Esophagus muscularis mucosa (tissue), 4 donors: ENCODE measurements at regions of chr7 and their contacts with region 1.

Region 1: GRCh38 chr7:64665980-64666662 is at the start of gene ZNF107:
- DNase-seq: peak; percentile 97
- H3K4me3 ChIP-seq: peak within 1 kb of the TSS; percentile 68 to 91 (median 76)
- H3K27ac ChIP-seq: peak within 1 kb of the TSS; percentile 71 to 81 (median 76)
- H3K4me1 ChIP-seq: peaks cover 8 to 23% (median 21%) of the 10 kb centered on the region in 4 donors
- H3K27me3 ChIP-seq: no peaks in the 10 kb centered on the region
- CTCF ChIP-seq: no peak
- EP300 ChIP-seq: no peak
- POLR2A ChIP-seq: no peak
- total RNA-seq, gene ZNF107: 1.8 to 3.3 (median 2.4) TPM

Region 2: DNA sequence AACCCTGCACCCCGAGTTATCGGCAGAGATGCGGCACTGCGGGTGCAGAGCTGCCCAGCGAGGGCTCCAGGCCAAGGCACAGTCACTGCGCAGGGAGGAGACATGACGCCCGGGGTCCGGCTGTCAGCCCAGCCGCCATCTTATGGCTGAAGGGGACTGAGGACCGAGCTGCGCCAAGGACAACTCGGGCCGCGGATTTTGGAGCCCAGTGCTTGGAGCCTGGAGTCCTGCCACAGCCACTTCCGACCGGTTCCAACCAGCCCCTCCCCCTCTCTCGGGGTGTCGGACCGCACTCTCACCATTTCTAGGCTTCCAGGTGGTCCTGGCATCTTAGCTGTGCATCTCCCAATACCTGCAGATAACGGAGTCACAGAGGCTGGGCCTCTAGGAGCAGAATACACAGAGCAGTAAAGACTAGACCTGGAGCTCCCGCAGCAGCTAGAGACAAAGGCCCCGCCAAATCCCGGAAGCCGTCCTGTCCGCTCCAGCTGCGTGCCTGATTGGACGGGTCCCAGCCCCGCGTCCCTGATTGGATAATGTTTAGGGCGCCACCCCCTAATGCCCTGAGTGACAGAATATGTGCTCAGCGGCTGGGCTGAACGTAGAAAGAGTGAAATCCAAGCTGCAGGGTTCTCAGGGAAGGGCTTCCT is 103.4 kb before region 1 on chr7 and contains the start of gene ZNF680:
- intact Hi-C with region 1: loop called (anchors 5 kb)
- DNase-seq: peak; percentile 98
- H3K4me3 ChIP-seq: peak within 1 kb of the TSS; percentile 76 to 87 (median 81)
- H3K27ac ChIP-seq: peak within 1 kb of the TSS; percentile 80 to 93 (median 86)
- H3K4me1 ChIP-seq: peaks cover 26 to 51% (median 47%) of the 10 kb centered on the region in 4 donors
- H3K27me3 ChIP-seq: no peaks in the 10 kb centered on the region
- CTCF ChIP-seq: peak in 1 of 3 experiments; percentile 12
- EP300 ChIP-seq: no peak
- POLR2A ChIP-seq: peak; percentile 14
- total RNA-seq, gene ZNF680: 6.1 to 16.2 (median 10.1) TPM

Region 3: DNA sequence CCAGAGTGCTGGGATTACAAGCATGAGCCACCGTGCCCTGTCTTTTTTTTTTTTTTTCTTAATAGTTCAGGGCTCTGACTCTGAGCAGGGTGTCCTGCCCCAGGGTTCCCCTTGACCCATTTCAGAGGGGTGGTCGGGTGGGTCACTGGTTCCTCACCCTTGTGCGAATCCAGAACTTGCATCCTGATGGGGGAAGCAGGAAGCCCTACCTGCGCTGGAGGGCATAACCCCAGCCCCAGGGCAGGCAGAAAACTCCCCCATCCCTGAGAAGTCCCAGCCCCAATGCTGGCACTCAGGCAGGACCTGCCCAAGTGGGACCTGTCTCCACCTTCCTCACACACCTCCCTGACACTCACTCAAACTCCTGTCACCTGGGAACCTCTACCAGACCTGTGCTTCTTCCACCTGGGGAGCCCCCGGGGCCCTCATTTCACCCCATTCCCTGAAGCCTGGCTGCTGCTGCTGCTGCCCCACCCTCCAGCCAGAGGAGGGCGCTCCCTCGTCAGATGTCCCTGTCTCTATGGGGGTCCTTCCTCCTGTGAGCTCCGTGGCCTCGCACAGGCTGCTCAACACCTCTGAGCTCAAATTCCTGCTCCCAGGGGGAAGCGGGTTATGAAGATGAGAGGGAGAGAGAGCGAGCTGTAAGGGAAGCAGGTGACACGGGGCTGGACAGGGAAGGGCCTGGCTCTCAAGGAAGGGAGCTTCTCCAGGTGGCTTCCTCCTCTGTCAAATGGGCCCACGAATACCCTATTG is 221.8 kb after region 1 on chr7:
- intact Hi-C with region 1: loop called (anchors 10 kb)
- DNase-seq: peak; percentile 88
- H3K4me3 ChIP-seq: peak overlapping the region; percentile 55 to 67 (median 56)
- H3K27ac ChIP-seq: no peak overlapping the region
- H3K4me1 ChIP-seq: peaks cover 19 to 66% (median 59%) of the 10 kb centered on the region in 4 donors
- H3K27me3 ChIP-seq: no peaks in the 10 kb centered on the region
- CTCF ChIP-seq: peak in 2 of 3 experiments; percentile 33 to 51
- EP300 ChIP-seq: no peak
- POLR2A ChIP-seq: no peak